CD4-positive, alpha-beta memory T cell (primary cell): ENCODE measurements at regions of chr13 and their contacts with region 1.

Region 1: GRCh38 chr13:94224670-94225069 is 254.8 kb downstream of the DCT start:
- DNase-seq: no peak
- H3K4me3 ChIP-seq: no peak overlapping the region
- H3K4me3 Mint-ChIP-seq: no peak overlapping the region
- H3K27ac ChIP-seq: no peak overlapping the region
- H3K27ac Mint-ChIP-seq: no peak overlapping the region
- H3K4me1 ChIP-seq: no peaks in the 10 kb centered on the region
- H3K4me1 Mint-ChIP-seq: no peaks in the 10 kb centered on the region
- H3K27me3 ChIP-seq: no peaks in the 10 kb centered on the region
- H3K27me3 Mint-ChIP-seq: peaks cover 1 to 7% of the 10 kb centered on the region in 2 donors

Region 2: GRCh38 chr13:94261163-94261562 is 36.5 kb after region 1 on chr13:
- CTCF ChIA-PET with region 1: no interaction called
- POLR2A ChIA-PET with region 1: no interaction called
- intact Hi-C with region 1: loop called (anchors 1 kb)
- DNase-seq: no peak
- H3K4me3 ChIP-seq: no peak overlapping the region
- H3K4me3 Mint-ChIP-seq: no peak overlapping the region
- H3K27ac ChIP-seq: no peak overlapping the region
- H3K27ac Mint-ChIP-seq: no peak overlapping the region
- H3K4me1 ChIP-seq: no peaks in the 10 kb centered on the region
- H3K4me1 Mint-ChIP-seq: peaks cover 0 to 15% (median 6%) of the 10 kb centered on the region in 4 donors
- H3K27me3 ChIP-seq: no peaks in the 10 kb centered on the region
- H3K27me3 Mint-ChIP-seq: peaks cover 0 to 2% of the 10 kb centered on the region in 2 donors